GM23248 (cell line): ENCODE measurements at regions of chr1 and their contacts with region 1.

Region 1: DNA sequence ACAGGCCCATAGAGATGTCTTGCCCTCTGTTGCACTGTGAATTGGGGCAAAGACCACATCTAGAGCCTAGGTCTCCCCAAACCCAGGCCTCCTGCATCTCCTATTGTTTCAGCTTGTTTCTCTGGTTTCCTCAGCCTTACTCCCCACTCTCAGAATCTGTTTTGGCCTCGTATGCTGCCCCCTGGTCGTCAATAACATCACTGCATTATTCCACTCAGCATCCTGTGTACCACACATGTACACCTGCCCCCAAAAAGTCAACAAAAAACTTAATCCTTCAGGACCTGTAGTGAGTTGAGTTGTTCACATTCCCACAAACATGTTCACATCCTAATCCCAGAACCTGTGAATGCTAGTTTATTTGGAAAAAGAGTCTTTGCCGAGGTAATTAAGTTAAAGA is 184.8 kb downstream of the BRINP2 start:
- DNase-seq: peak; percentile 55
- H3K4me3 ChIP-seq: no peak overlapping the region
- H3K27ac ChIP-seq: no peak overlapping the region
- H3K4me1 ChIP-seq: no peaks in the 10 kb centered on the region
- H3K27me3 ChIP-seq: peaks cover 9% of the 10 kb centered on the region; the same call in 1 of the 2 replicates

Region 2: GRCh38 chr1:176903474-176903873 is 452.1 kb before region 1 on chr1:
- in situ Hi-C with region 1: loop called (anchors 25 kb)
- DNase-seq: peak; percentile 26
- H3K4me3 ChIP-seq: no peak overlapping the region
- H3K27ac ChIP-seq: no peak overlapping the region
- H3K4me1 ChIP-seq: no peaks in the 10 kb centered on the region; the same call in 1 of the 2 replicates
- H3K27me3 ChIP-seq: peaks cover 37% of the 10 kb centered on the region

Region 3: DNA sequence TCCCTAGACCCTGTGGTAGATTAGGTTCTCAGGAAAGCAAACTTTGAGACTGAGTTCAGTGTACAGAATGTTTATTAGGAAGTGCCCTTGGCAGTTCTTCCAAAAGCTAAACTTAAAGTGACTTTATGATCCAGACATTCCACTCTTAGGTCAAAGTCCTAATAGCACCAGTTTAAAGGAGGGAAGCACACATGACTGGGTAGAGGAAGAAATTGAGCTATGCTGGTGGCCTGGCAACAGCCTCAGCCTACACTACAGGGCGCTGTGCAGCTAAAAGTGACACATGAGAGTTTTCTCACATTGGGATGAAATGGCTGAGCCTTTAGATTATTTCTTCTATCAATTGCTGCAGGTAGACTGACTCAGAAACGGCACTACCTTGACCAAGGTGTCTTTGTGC is 95.6 kb after region 1 on chr1:
- in situ Hi-C with region 1: no loop called
- DNase-seq: no peak
- H3K4me3 ChIP-seq: no peak overlapping the region
- H3K27ac ChIP-seq: no peak overlapping the region
- H3K4me1 ChIP-seq: peaks cover 18% of the 10 kb centered on the region
- H3K27me3 ChIP-seq: no peaks in the 10 kb centered on the region